ENCODE measurements at regions of chr7 and their contacts with region 1.

Region 1: GRCh38 chr7:7103343-7104313 is 78.7 kb upstream of the C1GALT1 start:
- DNase-seq: peak in 1 of 2 donors; percentile 6
- ATAC-seq: peak in 6 of 8 donors; percentile 43 to 79 (median 63)
- H3K4me3 ChIP-seq: peak overlapping the region in 3 of 10 donors; percentile 12 to 30 (median 18)
- H3K27ac ChIP-seq: no peak overlapping the region
- H3K4me1 ChIP-seq: peaks cover 0 to 29% (median 15%) of the 10 kb centered on the region in 9 donors
- H3K27me3 ChIP-seq: no peaks in the 10 kb centered on the region
- CTCF ChIP-seq: peak; percentile 54 to 80 (median 72)

Region 2: GRCh38 chr7:7002416-7003062 is 101.1 kb before region 1 on chr7:
- intact Hi-C with region 1: no loop called
- DNase-seq: no peak
- ATAC-seq: no peak
- H3K4me3 ChIP-seq: no peak overlapping the region
- H3K27ac ChIP-seq: no peak overlapping the region
- H3K4me1 ChIP-seq: no peaks in the 10 kb centered on the region
- H3K27me3 ChIP-seq: no peaks in the 10 kb centered on the region
- CTCF ChIP-seq: no peak

Region 3: DNA sequence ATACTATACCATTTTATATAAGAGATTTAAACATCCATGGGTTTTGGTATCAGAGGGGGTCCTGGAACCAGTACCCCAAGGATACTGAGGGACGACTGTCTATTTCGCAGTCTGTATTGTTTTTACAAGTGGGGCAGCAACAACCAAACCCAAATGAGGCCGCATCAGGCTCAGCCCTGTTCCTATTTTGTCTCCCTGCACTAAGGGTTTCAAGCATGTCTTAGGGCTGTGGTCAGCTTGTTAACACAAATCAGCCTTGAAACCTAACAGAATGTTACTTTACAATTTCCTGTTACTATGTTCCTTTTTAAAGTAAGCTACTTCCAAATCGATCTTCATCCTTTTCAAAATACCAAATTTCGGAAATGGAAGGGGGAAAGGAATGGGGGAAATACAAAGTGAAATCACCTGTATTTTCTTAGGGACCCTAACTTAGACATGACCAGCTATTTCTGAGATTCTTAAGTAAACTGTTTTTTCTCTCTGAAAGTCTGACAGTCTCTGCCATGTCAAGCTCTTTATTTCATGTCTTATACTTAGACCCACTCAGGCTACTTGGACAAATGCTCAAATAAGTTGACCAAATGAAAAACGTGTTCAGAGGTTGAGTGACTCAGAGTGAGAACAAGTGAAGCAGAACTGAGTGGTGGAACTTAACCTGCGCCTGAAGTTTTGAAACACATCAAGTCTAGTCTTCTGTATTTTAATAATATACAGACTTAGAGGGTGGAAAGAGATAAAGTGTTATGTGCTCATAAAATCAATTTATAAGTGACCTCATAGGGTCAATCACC is 154.5 kb after region 1 on chr7:
- intact Hi-C with region 1: loop called in 1 of 10 experiments (anchors 5 kb)
- DNase-seq: no peak
- ATAC-seq: peak in 1 of 8 donors; percentile 50
- H3K4me3 ChIP-seq: peak overlapping the region in 1 of 10 donors; percentile 36
- H3K27ac ChIP-seq: peak overlapping the region in 2 of 10 donors; percentile 18 to 84
- H3K4me1 ChIP-seq: peaks cover 0 to 37% (median 8%) of the 10 kb centered on the region in 9 donors
- H3K27me3 ChIP-seq: no peaks in the 10 kb centered on the region
- CTCF ChIP-seq: no peak

Region 4: DNA sequence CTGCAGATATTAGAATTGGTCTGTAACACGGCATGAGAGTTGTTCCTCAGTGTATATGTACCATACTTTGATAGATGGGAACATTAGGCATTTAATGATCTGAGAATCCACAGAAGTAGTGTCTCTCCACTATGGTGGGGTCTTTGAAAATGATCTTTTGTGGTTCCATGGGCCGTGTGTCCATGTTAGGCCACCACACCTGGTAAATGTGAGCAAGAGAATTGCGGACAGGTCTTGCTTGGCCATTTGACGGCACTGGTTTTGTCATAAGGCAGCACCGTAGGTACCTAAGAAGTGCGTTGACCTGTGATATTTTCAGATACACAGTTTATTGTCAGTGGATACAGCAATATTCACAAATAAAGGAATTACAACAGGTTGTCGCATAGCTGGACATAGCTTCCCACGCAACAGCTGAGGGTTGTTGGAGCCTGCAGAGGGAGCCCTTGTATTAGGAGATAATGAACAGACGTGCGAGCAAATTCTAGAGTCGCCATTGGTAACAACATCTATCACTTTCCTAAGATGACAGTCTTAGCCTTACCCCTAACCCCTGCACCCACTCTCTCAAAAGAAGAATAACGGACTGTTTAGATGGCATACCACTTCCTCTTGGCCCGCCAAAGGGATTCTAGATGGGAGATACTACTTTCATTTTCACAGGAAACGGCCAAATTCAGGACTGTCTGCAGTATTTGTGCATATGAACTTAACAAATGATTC is 320.7 kb after region 1 on chr7:
- intact Hi-C with region 1: loop called in 7 of 10 experiments (anchors 10 kb)
- DNase-seq: peak; percentile 18 to 69
- ATAC-seq: peak; percentile 69 to 89 (median 82)
- H3K4me3 ChIP-seq: peak overlapping the region in 9 of 10 donors; percentile 16 to 62 (median 52)
- H3K27ac ChIP-seq: peak overlapping the region in 4 of 10 donors; percentile 10 to 48 (median 28)
- H3K4me1 ChIP-seq: peaks cover 0 to 8% (median 0%) of the 10 kb centered on the region in 9 donors
- H3K27me3 ChIP-seq: peaks cover 0 to 5% (median 0%) of the 10 kb centered on the region in 7 donors
- CTCF ChIP-seq: peak; percentile 46 to 89 (median 77)

Region 5: GRCh38 chr7:7542251-7542835 is 438.7 kb after region 1 on chr7:
- intact Hi-C with region 1: loop called (anchors 2 to 5 kb)
- DNase-seq: no peak
- ATAC-seq: no peak
- H3K4me3 ChIP-seq: no peak overlapping the region
- H3K27ac ChIP-seq: no peak overlapping the region
- H3K4me1 ChIP-seq: no peaks in the 10 kb centered on the region
- H3K27me3 ChIP-seq: peaks cover 0 to 5% (median 0%) of the 10 kb centered on the region in 7 donors
- CTCF ChIP-seq: no peak

Measured in heart right ventricle (tissue), 16 donors.